IMR-90 (cell line): ENCODE measurements at regions of chr2 and their contacts with region 1.

Region 1: DNA sequence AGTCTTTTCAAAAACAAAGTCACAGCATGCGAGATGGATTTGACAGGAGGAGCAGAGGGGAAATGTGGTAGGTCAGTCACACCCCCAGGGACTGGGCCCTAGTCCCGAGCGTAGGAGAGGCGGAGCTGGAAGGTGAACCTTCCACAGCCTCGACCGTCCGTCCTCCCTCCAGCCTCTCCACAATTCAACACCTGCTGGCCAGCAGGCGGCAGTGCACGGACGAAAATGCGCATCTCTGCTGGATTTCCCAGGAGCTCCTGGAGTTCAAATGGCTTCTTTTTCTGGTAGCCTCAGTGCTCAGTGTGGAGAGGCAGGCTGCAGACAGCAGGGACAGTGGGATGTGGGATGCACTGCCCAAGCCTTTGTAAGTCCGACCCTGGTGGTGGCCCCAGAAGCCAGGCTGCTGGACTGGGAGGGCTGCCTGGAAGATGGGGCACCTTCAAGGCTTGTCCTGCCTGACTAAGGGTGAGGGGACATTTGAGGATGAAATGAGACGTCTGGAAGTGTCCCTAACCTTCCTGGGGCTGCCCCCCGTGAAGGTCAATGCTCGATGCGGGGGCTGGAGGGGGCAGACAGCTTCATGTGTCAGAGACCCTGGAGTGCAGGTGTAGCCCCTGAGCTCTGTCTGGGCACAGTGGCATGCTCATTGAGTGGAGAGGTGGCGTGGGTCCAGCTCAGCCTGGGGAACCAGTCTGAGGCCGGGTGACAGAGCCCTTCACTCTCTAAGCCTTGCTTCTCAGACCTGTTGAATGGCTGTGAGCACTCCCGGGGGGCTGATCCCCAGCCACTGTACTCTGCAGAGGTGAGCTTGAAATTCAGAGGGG is 189.5 kb downstream of the TFCP2L1 start:
- DNase-seq: peak; percentile 67
- ATAC-seq: peak; percentile 94
- H3K4me3 ChIP-seq: no peak overlapping the region
- H3K27ac ChIP-seq: no peak overlapping the region
- H3K4me1 ChIP-seq: no peaks in the 10 kb centered on the region
- H3K27me3 ChIP-seq: peaks cover 50% of the 10 kb centered on the region
- CTCF ChIP-seq: peak; percentile 74
- POLR2A ChIP-seq: no peak
- RAD21 ChIP-seq: peak; percentile 72

Region 2: DNA sequence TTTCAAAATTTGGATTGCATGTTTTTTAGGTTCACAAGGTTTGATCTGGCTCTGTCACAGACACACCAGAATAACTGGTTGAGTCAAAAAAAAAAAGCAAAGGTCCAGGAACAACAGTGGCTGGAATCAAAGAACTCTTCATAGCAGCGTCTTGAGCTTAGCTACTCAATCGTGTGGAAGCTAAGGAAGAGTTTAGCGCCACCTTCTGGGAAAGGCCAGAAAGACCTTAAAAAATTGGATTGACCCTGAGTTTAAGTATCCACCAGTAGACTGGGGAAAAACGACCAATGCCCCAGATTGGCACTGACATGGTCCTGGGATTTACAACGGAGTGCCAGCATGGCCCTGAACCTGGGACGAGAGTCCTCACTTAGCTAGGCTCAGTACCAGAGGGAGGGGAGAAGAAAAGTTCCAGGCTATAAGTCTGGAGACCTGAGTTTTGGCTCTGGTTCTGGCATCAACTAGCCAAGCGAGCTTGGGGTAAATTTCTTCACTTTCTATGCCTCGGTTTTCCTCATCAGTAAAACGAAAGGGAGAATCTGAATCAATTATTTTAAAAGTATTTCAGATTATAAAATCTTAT is 260.7 kb after region 1 on chr2:
- CTCF ChIA-PET with region 1: interaction called, 6 read pairs
- POLR2A ChIA-PET with region 1: no interaction called
- dilution Hi-C with region 1: no loop called
- in situ Hi-C with region 1: loop called (anchors 10 kb)
- intact Hi-C with region 1: loop called (anchors 1 kb)
- DNase-seq: peak; percentile 69
- ATAC-seq: peak; percentile 85
- H3K4me3 ChIP-seq: no peak overlapping the region
- H3K27ac ChIP-seq: no peak overlapping the region
- H3K4me1 ChIP-seq: peaks cover 8% of the 10 kb centered on the region
- H3K27me3 ChIP-seq: no peaks in the 10 kb centered on the region
- CTCF ChIP-seq: peak; percentile 70
- POLR2A ChIP-seq: no peak
- RAD21 ChIP-seq: peak; percentile 55

Region 3: DNA sequence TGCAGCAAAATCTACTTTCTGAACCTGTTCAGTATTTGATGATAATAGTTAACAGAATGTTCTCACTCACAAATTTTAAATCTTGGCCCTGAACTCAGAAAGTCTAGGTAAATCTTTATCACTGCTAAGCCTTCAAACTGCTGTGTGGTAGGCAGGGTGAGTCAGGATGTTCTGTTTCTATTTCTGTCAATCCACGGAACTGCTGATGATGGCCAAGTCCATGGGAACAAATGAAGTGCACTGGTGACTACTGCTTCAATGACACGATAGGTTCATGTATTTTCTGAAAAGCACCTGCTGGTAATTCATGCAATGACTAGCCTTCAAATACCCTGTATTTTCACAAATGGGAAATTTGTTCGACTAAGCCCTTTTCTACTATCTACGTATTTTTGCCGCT is 627.0 kb after region 1 on chr2:
- CTCF ChIA-PET with region 1: no interaction called
- POLR2A ChIA-PET with region 1: no interaction called
- dilution Hi-C with region 1: no loop called
- in situ Hi-C with region 1: loop called (anchors 25 kb)
- intact Hi-C with region 1: loop called (anchors 1 kb)
- DNase-seq: peak; percentile 87
- ATAC-seq: peak; percentile 55
- H3K4me3 ChIP-seq: no peak overlapping the region
- H3K27ac ChIP-seq: peak overlapping the region; percentile 59; the same call in 1 of the 2 replicates
- H3K4me1 ChIP-seq: peaks cover 6% of the 10 kb centered on the region; the same call in 1 of the 2 replicates
- H3K27me3 ChIP-seq: no peaks in the 10 kb centered on the region
- CTCF ChIP-seq: no peak; the same call in 1 of the 2 replicates
- POLR2A ChIP-seq: no peak
- RAD21 ChIP-seq: no peak

Region 4: GRCh38 chr2:121748202-121748601 is 652.7 kb after region 1 on chr2:
- CTCF ChIA-PET with region 1: interaction called, 3 read pairs
- POLR2A ChIA-PET with region 1: no interaction called
- dilution Hi-C with region 1: no loop called
- in situ Hi-C with region 1: loop called (anchors 25 kb)
- intact Hi-C with region 1: loop called (anchors 10 kb)
- DNase-seq: peak; percentile 51
- ATAC-seq: peak; percentile 90
- H3K4me3 ChIP-seq: no peak overlapping the region
- H3K27ac ChIP-seq: no peak overlapping the region
- H3K4me1 ChIP-seq: no peaks in the 10 kb centered on the region
- H3K27me3 ChIP-seq: no peaks in the 10 kb centered on the region
- CTCF ChIP-seq: peak; percentile 61
- POLR2A ChIP-seq: no peak
- RAD21 ChIP-seq: peak; percentile 63